Motor neuron (in vitro differentiated cells): ENCODE measurements at regions of chr1 and their contacts with region 1.

Region 1: GRCh38 chr1:200639790-200640669 is 19.5 kb upstream of the KIF14 start:
- ATAC-seq: peak; percentile 78 to 100 (median 93)
- H3K4me3 ChIP-seq: no peak overlapping the region
- H3K27ac ChIP-seq: no peak overlapping the region
- H3K4me1 ChIP-seq: no peaks in the 10 kb centered on the region

Region 2: DNA sequence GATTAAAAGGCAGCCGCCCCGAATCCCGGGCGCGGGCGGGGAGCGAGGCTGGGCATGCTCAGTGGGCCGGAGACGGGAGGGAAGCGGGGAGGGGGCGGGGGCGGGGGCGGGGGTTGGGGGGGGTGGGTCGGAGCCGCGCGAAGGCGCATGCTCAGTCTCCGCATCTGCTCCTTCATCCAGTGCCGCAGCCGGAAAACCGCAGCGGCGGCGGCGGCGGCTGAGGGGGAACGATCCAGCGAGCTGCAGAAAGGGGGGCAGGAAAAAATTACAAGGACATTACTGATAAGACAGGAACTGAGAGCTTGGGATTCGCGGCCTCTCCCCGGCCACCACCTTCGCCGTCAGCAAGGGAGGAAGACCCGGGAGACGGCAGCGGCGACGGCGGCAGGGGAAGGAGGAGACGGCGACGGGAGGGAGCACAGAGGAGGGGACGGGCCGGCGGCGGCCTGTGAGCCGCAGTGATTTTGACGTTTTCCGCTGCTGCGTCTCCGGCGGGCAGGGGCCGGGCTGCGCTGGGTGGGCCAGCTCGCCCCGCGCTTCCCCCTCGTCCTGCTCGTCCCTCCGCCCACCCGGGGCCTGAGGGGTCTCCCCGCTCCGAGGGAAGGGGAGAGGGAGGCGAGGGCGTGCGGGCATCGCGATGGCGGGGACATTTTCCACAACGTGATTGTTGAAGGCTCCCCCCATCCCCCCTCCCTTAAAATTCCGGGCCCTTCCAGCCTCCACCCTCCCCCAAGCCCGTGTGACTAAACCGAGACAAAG is 98.9 kb after region 1 on chr1 and contains the start of gene CAMSAP2:
- in situ Hi-C with region 1: loop called in 1 of 9 experiments (anchors 25 kb)
- ATAC-seq: peak; percentile 76 to 88 (median 80)
- H3K4me3 ChIP-seq: peak within 1 kb of the TSS; percentile 70 to 85 (median 77)
- H3K27ac ChIP-seq: peak within 1 kb of the TSS; percentile 95
- H3K4me1 ChIP-seq: peaks cover 5 to 15% of the 10 kb centered on the region in 2 donors
- total RNA-seq, gene CAMSAP2: 17.2 to 70.2 (median 59.7) TPM

Region 3: DNA sequence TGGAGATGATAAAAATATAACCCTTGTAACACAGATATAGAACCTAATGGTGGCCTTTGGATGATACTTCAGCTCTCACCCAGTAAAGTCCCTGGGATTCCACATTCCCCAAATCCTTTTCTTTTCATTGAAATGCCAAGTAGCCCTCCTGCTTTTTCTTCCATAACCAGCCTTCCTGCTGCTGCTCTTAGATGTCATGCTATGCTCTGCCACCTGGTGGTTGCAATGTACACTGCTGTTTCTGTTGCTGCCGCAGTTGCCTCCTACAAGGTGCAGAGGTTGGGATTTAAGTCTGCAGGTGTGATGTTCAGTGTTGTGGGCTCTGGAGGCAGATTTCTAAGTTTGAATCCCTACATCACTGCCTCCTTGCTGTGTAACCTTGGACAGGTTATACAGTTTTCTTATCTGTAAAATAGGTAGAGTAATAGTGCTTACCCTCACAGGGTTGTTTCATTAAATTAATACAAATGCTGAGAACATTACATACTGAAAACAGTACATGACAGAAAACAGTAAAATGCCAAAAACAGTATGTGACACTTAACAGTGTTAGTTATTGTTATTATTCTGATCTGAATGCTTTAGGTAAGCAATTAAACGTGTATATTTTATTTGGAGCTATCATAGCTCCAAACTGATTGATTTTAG is 163.0 kb after region 1 on chr1:
- in situ Hi-C with region 1: loop called in 3 of 9 experiments (anchors 10 to 25 kb)
- ATAC-seq: peak; percentile 76 to 92 (median 88)
- H3K4me3 ChIP-seq: no peak overlapping the region
- H3K27ac ChIP-seq: no peak overlapping the region
- H3K4me1 ChIP-seq: no peaks in the 10 kb centered on the region